Activated B cell treated with CpG ODN at 0.5 μM for 24 hours (primary cell): ENCODE measurements at regions of chr20 and their contacts with region 1.

Region 1: GRCh38 chr20:15889514-15890256 is 683.6 kb downstream of the KIF16B start:
- DNase-seq: no peak
- ATAC-seq: peak; percentile 32
- H3K4me3 Mint-ChIP-seq: no peak overlapping the region
- H3K27ac Mint-ChIP-seq: peak overlapping the region; percentile 74
- H3K4me1 Mint-ChIP-seq: peaks cover 33% of the 10 kb centered on the region
- H3K27me3 Mint-ChIP-seq: no peaks in the 10 kb centered on the region
- CTCF ChIP-seq: no peak

Region 2: GRCh38 chr20:15867901-15868300 is 21.8 kb before region 1 on chr20:
- CTCF ChIA-PET with region 1: no interaction called
- POLR2A ChIA-PET with region 1: no interaction called
- intact Hi-C with region 1: loop called (anchors 2 kb)
- DNase-seq: no peak
- ATAC-seq: no peak
- H3K4me3 Mint-ChIP-seq: no peak overlapping the region
- H3K27ac Mint-ChIP-seq: no peak overlapping the region
- H3K4me1 Mint-ChIP-seq: peaks cover 6% of the 10 kb centered on the region
- H3K27me3 Mint-ChIP-seq: no peaks in the 10 kb centered on the region
- CTCF ChIP-seq: no peak